ENCODE measurements at regions of chr2 and their contacts with region 1.

Region 1: DNA sequence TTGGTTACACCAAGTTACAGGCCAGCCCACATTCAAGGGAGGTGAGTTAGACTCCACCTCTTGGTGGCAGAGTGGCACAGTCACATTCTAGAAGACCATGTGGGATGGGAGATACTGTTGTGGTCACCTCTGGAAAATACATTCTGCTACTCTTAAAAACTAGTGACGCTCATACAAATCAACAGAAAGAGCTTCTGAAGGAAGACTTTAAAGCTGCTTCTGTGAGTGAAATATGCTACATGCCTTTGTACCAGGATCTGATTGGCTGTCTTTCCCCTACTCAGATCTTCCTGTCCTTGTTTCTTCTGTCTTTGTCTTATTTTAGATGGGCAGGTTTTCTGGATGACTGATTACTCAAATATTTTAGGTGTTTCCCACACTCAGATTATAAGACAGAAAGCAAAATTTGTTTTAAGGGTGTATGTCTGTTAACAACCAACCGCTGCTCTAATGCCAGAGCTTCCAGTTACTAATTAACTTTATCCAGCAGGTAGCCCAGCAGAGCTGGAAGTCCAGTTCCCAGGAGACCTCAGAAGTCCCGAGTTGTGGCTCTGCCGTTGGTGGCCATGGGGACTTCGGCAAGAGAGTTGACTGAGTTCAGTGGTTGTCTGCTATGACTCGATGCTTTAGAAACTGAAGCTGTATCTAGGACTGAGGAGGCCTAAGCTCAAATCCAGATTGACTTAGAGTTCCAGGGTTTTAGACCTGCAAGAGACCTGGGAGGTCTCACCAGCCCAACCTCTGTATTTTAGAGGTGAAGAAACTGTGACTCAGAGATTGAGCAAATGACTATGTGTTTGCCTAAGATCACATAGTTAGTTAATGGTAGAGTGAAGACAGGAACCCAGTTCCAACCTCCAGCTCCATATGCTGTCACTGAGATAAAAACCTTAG is 7.4 kb downstream of the IL1R2 start:
- DNase-seq: peak; percentile 89
- ATAC-seq: peak; percentile 95
- H3K4me3 ChIP-seq: peak overlapping the region; percentile 6 to 60 (median 54)
- H3K27ac ChIP-seq: peak overlapping the region; percentile 86
- H3K4me1 ChIP-seq: peaks cover 38% of the 10 kb centered on the region
- H3K27me3 ChIP-seq: peaks cover 2 to 17% of the 10 kb centered on the region in 2 experiments
- CTCF ChIP-seq: peak; percentile 63
- EP300 ChIP-seq: peak in 1 of 2 experiments; percentile 57; a peak in 2 of 4 replicates
- POLR2A ChIP-seq: peak; percentile 75 to 81
- RAD21 ChIP-seq: peak; percentile 15; the same call in 1 of the 2 replicates

Region 2: GRCh38 chr2:101961296-101962191 is 37.6 kb before region 1 on chr2:
- CTCF ChIA-PET with region 1: no interaction called
- POLR2A ChIA-PET with region 1: interaction called, 21 read pairs
- in situ Hi-C with region 1: no loop called
- intact Hi-C with region 1: no loop called
- DNase-seq: peak; percentile 95
- ATAC-seq: peak; percentile 89
- H3K4me3 ChIP-seq: peak overlapping the region; percentile 18 to 65 (median 37); a peak in 5 of 6 replicates
- H3K27ac ChIP-seq: peak overlapping the region; percentile 80
- H3K4me1 ChIP-seq: peaks cover 35% of the 10 kb centered on the region
- H3K27me3 ChIP-seq: no peaks in the 10 kb centered on the region
- CTCF ChIP-seq: peak; percentile 36
- EP300 ChIP-seq: peak; percentile 68 to 85
- POLR2A ChIP-seq: peak in 1 of 2 experiments; percentile 46; a peak in 1 of 4 replicates
- RAD21 ChIP-seq: no peak; the same call in 1 of the 2 replicates

Region 3: GRCh38 chr2:101983928-101984327 is 15.2 kb before region 1 on chr2:
- CTCF ChIA-PET with region 1: no interaction called
- POLR2A ChIA-PET with region 1: interaction called, 58 read pairs
- in situ Hi-C with region 1: no loop called
- intact Hi-C with region 1: no loop called
- DNase-seq: peak; percentile 40
- ATAC-seq: peak; percentile 27
- H3K4me3 ChIP-seq: no peak overlapping the region
- H3K27ac ChIP-seq: no peak overlapping the region
- H3K4me1 ChIP-seq: peaks cover 49% of the 10 kb centered on the region
- H3K27me3 ChIP-seq: peaks cover 3 to 15% of the 10 kb centered on the region in 2 experiments; a peak in 3 of 5 replicates
- CTCF ChIP-seq: peak; percentile 62
- EP300 ChIP-seq: no peak
- POLR2A ChIP-seq: no peak
- RAD21 ChIP-seq: peak; percentile 70; the same call in 1 of the 2 replicates

Region 4: DNA sequence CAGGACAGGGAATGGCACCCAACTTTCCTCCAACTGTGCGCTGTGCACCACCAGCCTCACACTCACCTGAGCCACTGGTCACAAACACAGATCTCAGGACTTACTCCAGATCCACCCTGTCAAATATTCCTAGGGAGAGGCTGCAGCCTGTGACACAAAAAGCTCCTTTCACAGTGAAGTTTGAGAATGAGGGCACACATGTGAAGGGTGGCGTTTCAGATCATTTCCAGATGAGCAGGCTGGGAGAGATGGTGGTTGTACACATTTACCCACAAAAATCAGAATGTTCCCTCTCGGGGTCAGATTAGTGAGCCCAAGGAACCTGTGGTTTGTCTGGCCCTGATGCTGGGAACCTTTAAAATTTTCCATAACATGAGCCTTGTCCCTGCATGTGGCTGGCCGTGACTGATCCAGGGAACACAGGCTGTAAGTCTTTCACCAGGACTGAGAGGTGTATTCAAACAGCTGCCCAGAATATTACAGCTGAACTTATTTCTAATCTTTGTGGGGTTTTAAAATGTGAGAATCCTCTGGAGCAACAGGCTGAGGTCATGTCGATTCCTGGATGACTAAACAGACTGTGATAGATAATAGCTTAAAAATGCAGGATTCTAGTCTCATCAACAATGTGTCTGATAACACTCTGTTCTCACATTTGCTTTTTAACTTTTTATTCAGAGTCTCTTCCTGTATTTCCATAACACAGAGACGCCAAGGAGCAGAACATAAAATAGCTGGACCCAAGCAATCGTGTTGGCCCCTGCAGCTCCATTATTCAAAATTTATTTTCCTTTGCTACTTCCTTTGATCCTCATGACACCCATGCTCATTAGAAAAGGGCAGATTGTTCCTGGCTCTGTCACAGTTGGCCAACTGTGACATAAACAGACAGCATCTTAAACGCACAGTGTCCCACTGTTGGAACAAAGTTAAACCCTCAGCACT is 28.2 kb after region 1 on chr2:
- CTCF ChIA-PET with region 1: no interaction called
- POLR2A ChIA-PET with region 1: no interaction called
- in situ Hi-C with region 1: no loop called
- intact Hi-C with region 1: no loop called
- DNase-seq: no peak
- ATAC-seq: peak; percentile 26; the same call in 2 of the 3 replicates
- H3K4me3 ChIP-seq: no peak overlapping the region
- H3K27ac ChIP-seq: peak overlapping the region; percentile 42
- H3K4me1 ChIP-seq: peaks cover 99% of the 10 kb centered on the region
- H3K27me3 ChIP-seq: no peaks in the 10 kb centered on the region
- CTCF ChIP-seq: no peak
- EP300 ChIP-seq: no peak
- POLR2A ChIP-seq: no peak
- RAD21 ChIP-seq: no peak

Region 5: DNA sequence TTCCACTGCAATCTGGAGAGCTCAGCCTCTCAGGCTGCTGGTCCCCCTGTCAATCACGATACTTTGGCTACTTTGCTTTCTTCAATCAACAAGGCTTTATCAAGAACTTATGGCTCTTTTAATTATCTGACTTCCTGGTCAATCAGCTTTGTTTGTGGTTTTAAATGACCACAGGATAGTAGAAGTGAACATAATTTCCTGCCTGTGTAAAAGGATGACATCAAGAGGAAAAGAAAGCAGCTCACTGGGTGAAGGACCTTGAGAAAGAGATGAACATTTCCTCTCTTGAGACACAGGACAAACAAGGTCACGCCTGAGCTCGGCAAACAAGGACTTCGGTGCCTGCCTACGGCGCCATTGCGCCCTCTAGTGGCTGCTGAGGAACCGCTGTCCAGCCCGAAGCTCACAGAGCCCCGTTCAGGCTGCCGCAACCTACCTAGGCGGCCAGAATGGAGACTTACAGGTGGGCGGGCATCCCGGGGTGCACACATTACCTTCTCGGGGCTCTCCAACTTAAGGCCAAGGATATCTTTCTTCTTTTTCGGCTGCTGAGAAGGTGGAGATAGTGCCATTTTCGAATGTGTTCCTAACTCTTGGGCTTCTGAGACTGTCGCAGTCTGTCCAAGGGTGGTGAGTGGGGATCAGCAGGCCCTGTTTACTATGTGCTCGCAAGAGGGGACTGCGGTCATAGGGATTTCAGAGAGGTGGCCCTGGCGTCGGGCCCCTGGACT is 241.7 kb after region 1 on chr2:
- CTCF ChIA-PET with region 1: no interaction called
- POLR2A ChIA-PET with region 1: interaction called, 11 read pairs
- in situ Hi-C with region 1: no loop called
- intact Hi-C with region 1: no loop called
- DNase-seq: peak; percentile 88
- ATAC-seq: peak; percentile 97
- H3K4me3 ChIP-seq: peak overlapping the region in 2 of 3 experiments; percentile 12 to 55; a peak in 3 of 6 replicates
- H3K27ac ChIP-seq: no peak overlapping the region
- H3K4me1 ChIP-seq: peaks cover 49% of the 10 kb centered on the region
- H3K27me3 ChIP-seq: peaks cover 0 to 38% of the 10 kb centered on the region in 2 experiments; a peak in 3 of 5 replicates
- CTCF ChIP-seq: peak; percentile 100
- EP300 ChIP-seq: peak in 1 of 2 experiments; percentile 86; a peak in 2 of 4 replicates
- POLR2A ChIP-seq: no peak
- RAD21 ChIP-seq: peak; percentile 97

Region 6: GRCh38 chr2:102355526-102356380 is 356.6 kb after region 1 on chr2 and contains the start of gene IL18R1:
- CTCF ChIA-PET with region 1: no interaction called
- POLR2A ChIA-PET with region 1: no interaction called
- in situ Hi-C with region 1: loop called (anchors 10 kb)
- intact Hi-C with region 1: loop called (anchors 5 kb)
- DNase-seq: peak; percentile 53
- ATAC-seq: peak; percentile 100
- H3K4me3 ChIP-seq: peak within 1 kb of the TSS; percentile 55 to 77 (median 70)
- H3K27ac ChIP-seq: no peak within 1 kb of the TSS
- H3K4me1 ChIP-seq: no peaks in the 10 kb centered on the region; the same call in 1 of the 2 replicates
- H3K27me3 ChIP-seq: peaks cover 2 to 18% of the 10 kb centered on the region in 2 experiments; a peak in 4 of 5 replicates
- CTCF ChIP-seq: peak; percentile 90
- EP300 ChIP-seq: no peak
- POLR2A ChIP-seq: no peak
- RAD21 ChIP-seq: peak; percentile 94
- total RNA-seq, gene IL18R1: 0.04 TPM in 1 of 2 replicates, not detected in the other